ENCODE measurements at regions of chr5 and their contacts with region 1.

Region 1: GRCh38 chr5:154878642-154879335 is 20.4 kb downstream of the CNOT8 start:
- DNase-seq: no peak
- ATAC-seq: no peak
- H3K4me3 ChIP-seq: no peak overlapping the region
- H3K27ac ChIP-seq: no peak overlapping the region
- H3K4me1 ChIP-seq: no peaks in the 10 kb centered on the region
- H3K27me3 ChIP-seq: no peaks in the 10 kb centered on the region
- CTCF ChIP-seq: no peak
- EP300 ChIP-seq: no peak
- POLR2A ChIP-seq: no peak
- RAD21 ChIP-seq: no peak

Region 2: DNA sequence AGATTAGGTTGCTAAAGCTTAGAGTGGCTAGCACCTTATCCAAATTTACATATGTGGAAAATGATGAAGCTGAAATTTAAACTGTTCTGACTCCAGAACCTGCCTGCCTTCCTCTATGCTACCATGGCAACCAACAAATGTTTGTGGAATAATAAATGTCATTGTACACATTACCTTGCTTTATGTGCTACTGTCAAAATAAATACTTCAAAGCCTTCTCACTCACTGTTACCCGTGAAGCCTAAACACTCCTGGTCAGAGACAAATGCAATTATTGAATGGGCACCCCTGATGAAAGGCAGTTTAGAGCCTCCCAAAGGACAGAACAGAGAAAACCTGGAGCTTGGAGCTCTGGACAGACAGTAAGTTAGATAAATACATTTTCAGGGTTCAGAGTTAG is 998.7 kb before region 1 on chr5:
- CTCF ChIA-PET with region 1: no interaction called
- POLR2A ChIA-PET with region 1: no interaction called
- in situ Hi-C with region 1: no loop called
- intact Hi-C with region 1: no loop called
- DNase-seq: no peak
- ATAC-seq: no peak
- H3K4me3 ChIP-seq: no peak overlapping the region
- H3K27ac ChIP-seq: no peak overlapping the region
- H3K4me1 ChIP-seq: no peaks in the 10 kb centered on the region
- H3K27me3 ChIP-seq: no peaks in the 10 kb centered on the region; a peak in 1 of 5 replicates
- CTCF ChIP-seq: no peak
- EP300 ChIP-seq: no peak
- POLR2A ChIP-seq: no peak
- RAD21 ChIP-seq: no peak

Region 3: DNA sequence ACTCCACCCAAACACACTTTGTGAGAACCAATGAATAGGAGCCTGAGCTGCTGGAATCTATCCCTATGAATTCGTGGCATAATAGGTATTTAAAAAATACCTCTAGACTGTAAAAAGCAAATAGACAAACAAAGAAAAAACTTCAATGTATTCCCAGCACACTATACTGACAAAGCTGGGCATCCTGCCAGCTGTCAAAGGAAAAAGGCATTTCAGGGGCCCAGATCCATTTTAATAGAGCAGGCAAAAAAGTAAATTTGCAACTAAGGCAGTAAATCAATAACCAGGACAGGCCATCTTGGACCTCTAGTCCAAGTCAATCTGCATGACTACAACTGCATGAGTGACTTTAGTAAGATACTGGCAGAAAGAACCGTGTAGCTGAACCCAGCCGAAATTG is 149.2 kb before region 1 on chr5:
- CTCF ChIA-PET with region 1: no interaction called
- POLR2A ChIA-PET with region 1: no interaction called
- in situ Hi-C with region 1: no loop called
- intact Hi-C with region 1: no loop called
- DNase-seq: no peak
- ATAC-seq: no peak
- H3K4me3 ChIP-seq: no peak overlapping the region
- H3K27ac ChIP-seq: no peak overlapping the region
- H3K4me1 ChIP-seq: peaks cover 0 to 3% of the 10 kb centered on the region in 2 experiments; a peak in 3 of 5 replicates
- H3K27me3 ChIP-seq: no peaks in the 10 kb centered on the region
- CTCF ChIP-seq: no peak
- EP300 ChIP-seq: no peak
- POLR2A ChIP-seq: no peak
- RAD21 ChIP-seq: no peak

Region 4: DNA sequence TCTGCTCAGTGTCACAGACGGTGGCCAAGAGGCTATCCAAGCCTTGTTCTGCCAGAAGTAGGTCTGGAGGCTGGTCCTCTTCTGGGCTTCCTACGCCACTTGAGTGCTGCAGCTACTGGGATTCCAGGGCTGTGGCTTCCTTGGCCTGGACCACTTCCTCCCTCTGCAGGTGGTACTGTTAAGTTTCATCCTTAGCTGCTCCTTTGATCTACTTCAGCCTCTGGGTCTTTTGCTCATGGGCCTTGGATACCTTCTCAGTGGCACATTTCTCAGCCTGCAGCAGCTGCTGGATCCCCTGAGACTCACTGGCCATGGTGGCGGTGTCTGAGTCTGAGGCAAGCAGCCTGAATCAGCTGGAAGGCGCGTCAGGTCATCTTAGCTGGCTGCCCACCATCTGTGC is 10.1 kb before region 1 on chr5:
- CTCF ChIA-PET with region 1: no interaction called
- POLR2A ChIA-PET with region 1: interaction called, 11 read pairs
- in situ Hi-C with region 1: no loop called
- intact Hi-C with region 1: no loop called
- DNase-seq: peak in 3 of 4 experiments; percentile 22 to 55 (median 49)
- ATAC-seq: peak; percentile 89
- H3K4me3 ChIP-seq: no peak overlapping the region
- H3K27ac ChIP-seq: no peak overlapping the region
- H3K4me1 ChIP-seq: no peaks in the 10 kb centered on the region
- H3K27me3 ChIP-seq: no peaks in the 10 kb centered on the region
- CTCF ChIP-seq: peak; percentile 54 to 73 (median 60)
- EP300 ChIP-seq: no peak
- POLR2A ChIP-seq: no peak
- RAD21 ChIP-seq: peak; percentile 40 to 70

Measured in K562 (cell line).